Activated CD4-positive, alpha-beta memory T cell treated with anti-CD3 and anti-CD28 coated beads, Interleukin-2, amount 10 ng/mL, durations not matched to agents 7 days and 5 days (primary cell): ENCODE measurements at regions of chr11 and their contacts with region 1.

Region 1: DNA sequence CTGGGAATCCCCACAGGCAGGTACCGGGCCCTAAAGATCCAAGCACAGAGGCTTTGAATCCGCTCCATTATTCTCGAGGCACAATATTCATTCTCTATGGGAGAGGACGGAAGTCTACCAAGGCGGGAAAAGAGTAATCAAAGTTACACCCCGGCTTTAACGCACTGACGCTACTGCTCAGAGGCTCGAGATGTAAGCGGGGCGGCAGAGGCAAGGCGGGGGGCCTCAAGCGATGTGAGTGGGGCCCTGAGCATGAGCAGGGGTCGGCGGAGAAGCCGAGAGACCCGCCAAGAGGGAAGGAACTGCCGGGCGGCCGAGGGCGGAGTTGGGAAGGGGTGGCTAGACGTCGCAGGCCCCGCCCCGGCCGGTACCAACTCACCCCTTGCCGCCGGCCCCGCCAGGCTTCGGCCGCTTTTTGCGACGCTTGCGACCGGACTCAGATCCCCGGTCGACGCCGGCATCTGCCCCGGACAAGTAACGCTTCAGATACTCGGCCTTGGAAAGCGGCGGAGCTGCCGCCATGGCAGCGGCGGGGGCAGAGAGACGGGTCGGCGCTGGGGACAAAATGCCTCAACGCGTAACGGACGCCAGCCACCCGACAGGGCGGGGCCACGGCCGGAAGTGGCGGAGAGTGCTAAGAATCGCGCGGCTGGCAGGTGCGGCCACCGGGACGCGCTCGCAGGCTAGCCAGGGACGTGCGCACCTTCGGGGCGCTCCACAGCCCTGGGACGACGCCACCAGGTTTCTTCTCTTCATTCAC is at the start of gene BUD13:
- DNase-seq: peak; percentile 94
- H3K4me3 Mint-ChIP-seq: peak within 1 kb of the TSS; percentile 97
- H3K27ac Mint-ChIP-seq: peak within 1 kb of the TSS; percentile 91
- H3K4me1 Mint-ChIP-seq: peaks cover 59% of the 10 kb centered on the region
- H3K27me3 Mint-ChIP-seq: no peaks in the 10 kb centered on the region
- total RNA-seq, gene BUD13: 34.1 to 35.1 TPM

Region 2: GRCh38 chr11:116762132-116762531 is 10.5 kb before region 1 on chr11:
- CTCF ChIA-PET with region 1: interaction called, 3 read pairs
- POLR2A ChIA-PET with region 1: interaction called, 13 read pairs
- DNase-seq: no peak
- H3K4me3 Mint-ChIP-seq: no peak overlapping the region
- H3K27ac Mint-ChIP-seq: no peak overlapping the region
- H3K4me1 Mint-ChIP-seq: no peaks in the 10 kb centered on the region
- H3K27me3 Mint-ChIP-seq: no peaks in the 10 kb centered on the region

Region 3: GRCh38 chr11:116782728-116783127 is 10.1 kb after region 1 on chr11:
- CTCF ChIA-PET with region 1: interaction called, 10 read pairs
- POLR2A ChIA-PET with region 1: interaction called, 119 read pairs
- DNase-seq: no peak
- H3K4me3 Mint-ChIP-seq: no peak overlapping the region
- H3K27ac Mint-ChIP-seq: peak overlapping the region; percentile 75
- H3K4me1 Mint-ChIP-seq: peaks cover 79% of the 10 kb centered on the region
- H3K27me3 Mint-ChIP-seq: no peaks in the 10 kb centered on the region

Region 4: DNA sequence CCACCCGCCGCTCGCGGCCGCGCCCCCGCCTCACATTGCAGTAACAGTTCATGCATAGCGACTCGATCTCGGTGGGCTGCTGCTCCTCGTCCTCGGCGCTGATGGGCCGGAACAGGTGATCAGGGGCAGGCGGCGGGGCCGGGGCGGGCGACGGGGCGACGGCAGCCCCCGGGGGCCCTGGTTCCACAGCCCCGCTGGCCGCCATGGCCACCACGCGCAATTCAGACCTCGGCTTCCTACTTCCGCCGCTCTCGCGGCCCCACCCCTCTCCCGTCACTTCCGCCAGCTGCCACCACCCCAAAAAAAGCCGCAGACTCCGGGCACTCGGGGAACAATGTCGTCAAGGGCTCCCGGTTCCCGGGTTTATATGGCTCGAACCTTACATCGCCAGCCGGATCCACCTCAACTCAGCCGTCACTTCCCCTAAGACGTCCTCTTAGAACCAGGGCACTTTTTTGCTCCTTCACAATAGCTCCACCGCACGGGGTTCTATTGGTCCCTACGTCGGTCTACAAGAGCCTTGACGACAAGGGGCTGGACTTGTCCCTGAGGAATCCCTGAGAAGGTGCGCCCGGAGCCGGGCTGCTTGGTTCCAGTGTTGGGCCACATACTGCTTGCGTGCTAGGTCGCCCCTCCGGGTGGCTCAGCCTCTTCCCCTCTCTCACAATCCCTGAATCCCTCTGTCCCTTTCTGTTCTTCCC is 15.3 kb after region 1 on chr11 and contains the start of gene ZPR1:
- CTCF ChIA-PET with region 1: interaction called, 33 read pairs
- POLR2A ChIA-PET with region 1: interaction called, 119 read pairs
- DNase-seq: peak; percentile 89
- H3K4me3 Mint-ChIP-seq: peak within 1 kb of the TSS; percentile 91
- H3K27ac Mint-ChIP-seq: peak within 1 kb of the TSS; percentile 82
- H3K4me1 Mint-ChIP-seq: peaks cover 52% of the 10 kb centered on the region
- H3K27me3 Mint-ChIP-seq: peaks cover 9% of the 10 kb centered on the region
- total RNA-seq, gene ZPR1: 55.6 to 57.6 TPM

Region 5: GRCh38 chr11:116821050-116821918 is 48.7 kb after region 1 on chr11:
- CTCF ChIA-PET with region 1: no interaction called
- POLR2A ChIA-PET with region 1: no interaction called
- DNase-seq: no peak
- H3K4me3 Mint-ChIP-seq: no peak overlapping the region
- H3K27ac Mint-ChIP-seq: no peak overlapping the region
- H3K4me1 Mint-ChIP-seq: no peaks in the 10 kb centered on the region
- H3K27me3 Mint-ChIP-seq: no peaks in the 10 kb centered on the region

Region 6: GRCh38 chr11:117143871-117144476 is 371.4 kb after region 1 on chr11 and contains the start of gene PAFAH1B2:
- CTCF ChIA-PET with region 1: no interaction called
- POLR2A ChIA-PET with region 1: interaction called, 10 read pairs
- DNase-seq: peak; percentile 95
- H3K4me3 Mint-ChIP-seq: peak within 1 kb of the TSS; percentile 96
- H3K27ac Mint-ChIP-seq: peak within 1 kb of the TSS; percentile 86
- H3K4me1 Mint-ChIP-seq: peaks cover 45% of the 10 kb centered on the region
- H3K27me3 Mint-ChIP-seq: peaks cover 17% of the 10 kb centered on the region
- total RNA-seq, gene PAFAH1B2: 60.1 to 62.8 TPM